ENCODE measurements at regions of chr5 and their contacts with region 1.

Region 1: GRCh38 chr5:68170826-68171558 is 44.6 kb upstream of the PIK3R1 start:
- DNase-seq: peak; percentile 98
- H3K4me3 ChIP-seq: peak overlapping the region in 1 of 4 donors; percentile 14
- H3K27ac ChIP-seq: peak overlapping the region; percentile 77 to 89 (median 87)
- H3K4me1 ChIP-seq: peaks cover 0 to 37% (median 36%) of the 10 kb centered on the region in 4 donors
- H3K27me3 ChIP-seq: no peaks in the 10 kb centered on the region
- CTCF ChIP-seq: no peak
- EP300 ChIP-seq: peak; percentile 98 to 99 (median 98)
- POLR2A ChIP-seq: no peak

Region 2: DNA sequence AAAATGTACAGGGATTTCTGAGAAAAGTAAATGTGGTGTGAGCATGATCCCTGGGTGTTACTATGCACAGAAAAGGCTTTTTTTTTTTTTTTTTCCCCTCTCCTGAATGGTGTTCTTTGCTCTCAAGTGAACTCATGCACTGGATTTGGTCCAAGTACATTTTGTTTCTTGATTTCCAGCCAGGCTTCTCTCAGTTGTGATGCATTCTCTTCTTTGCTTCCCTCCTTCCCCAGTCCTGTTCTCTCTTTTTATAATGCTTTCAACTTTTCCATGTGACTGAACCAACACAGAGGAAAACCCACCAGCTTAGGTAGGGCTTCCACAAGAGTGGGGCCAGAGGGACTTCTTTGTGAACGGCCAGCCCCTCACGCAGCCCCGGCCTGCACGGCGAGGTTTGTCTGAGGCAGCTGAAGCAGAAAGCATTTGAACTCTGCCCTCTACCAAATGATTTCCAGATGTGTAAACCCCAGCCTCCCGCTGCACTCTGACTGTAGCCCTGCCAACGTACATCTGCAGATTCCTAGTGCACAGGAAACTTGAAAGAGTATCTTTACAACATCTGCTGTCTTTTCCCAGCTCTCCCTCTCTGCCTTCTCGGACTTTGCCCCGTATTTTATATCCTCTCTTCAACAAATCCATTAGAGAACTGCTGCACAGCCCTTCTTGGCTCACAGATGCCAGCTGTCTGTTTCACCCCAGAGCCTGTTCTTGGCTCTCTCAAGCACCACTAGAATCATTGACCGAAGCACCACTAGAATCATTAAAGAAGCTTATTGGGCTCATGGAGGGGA is 902.6 kb before region 1 on chr5:
- intact Hi-C with region 1: loop called (anchors 1 kb)
- DNase-seq: peak; percentile 95
- H3K4me3 ChIP-seq: peak overlapping the region in 2 of 4 donors; percentile 13 to 14
- H3K27ac ChIP-seq: peak overlapping the region; percentile 91 to 94 (median 92)
- H3K4me1 ChIP-seq: peaks cover 0 to 89% (median 80%) of the 10 kb centered on the region in 4 donors
- H3K27me3 ChIP-seq: no peaks in the 10 kb centered on the region
- CTCF ChIP-seq: no peak
- EP300 ChIP-seq: peak; percentile 94 to 99 (median 96)
- POLR2A ChIP-seq: no peak

Region 3: DNA sequence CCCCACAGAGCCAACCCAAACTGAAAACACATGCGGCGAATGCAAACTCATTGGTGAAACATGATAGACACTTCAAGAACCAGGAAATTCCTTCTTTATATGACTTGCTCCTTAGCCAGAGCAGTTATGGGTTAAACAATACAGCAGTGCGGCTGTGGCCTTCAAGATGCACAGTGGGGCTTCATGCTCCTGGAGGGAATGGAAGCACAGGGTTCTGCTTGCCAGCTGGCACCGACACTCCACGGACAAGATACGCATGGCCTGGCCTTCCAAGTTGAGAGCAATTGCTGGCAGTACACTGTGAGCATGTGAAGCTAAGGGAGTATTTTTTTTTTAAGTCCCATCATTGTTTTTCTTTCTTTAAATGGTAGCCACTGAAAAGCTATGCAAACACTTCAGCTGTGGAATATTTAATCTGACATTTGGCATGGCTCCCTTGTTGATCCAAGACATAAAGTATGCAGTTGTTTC is 522.8 kb before region 1 on chr5:
- intact Hi-C with region 1: loop called (anchors 5 kb)
- DNase-seq: peak; percentile 98
- H3K4me3 ChIP-seq: no peak overlapping the region
- H3K27ac ChIP-seq: peak overlapping the region; percentile 77 to 82 (median 79)
- H3K4me1 ChIP-seq: peaks cover 0 to 62% (median 48%) of the 10 kb centered on the region in 4 donors
- H3K27me3 ChIP-seq: no peaks in the 10 kb centered on the region
- CTCF ChIP-seq: no peak
- EP300 ChIP-seq: peak; percentile 45 to 89 (median 74)
- POLR2A ChIP-seq: no peak

Region 4: DNA sequence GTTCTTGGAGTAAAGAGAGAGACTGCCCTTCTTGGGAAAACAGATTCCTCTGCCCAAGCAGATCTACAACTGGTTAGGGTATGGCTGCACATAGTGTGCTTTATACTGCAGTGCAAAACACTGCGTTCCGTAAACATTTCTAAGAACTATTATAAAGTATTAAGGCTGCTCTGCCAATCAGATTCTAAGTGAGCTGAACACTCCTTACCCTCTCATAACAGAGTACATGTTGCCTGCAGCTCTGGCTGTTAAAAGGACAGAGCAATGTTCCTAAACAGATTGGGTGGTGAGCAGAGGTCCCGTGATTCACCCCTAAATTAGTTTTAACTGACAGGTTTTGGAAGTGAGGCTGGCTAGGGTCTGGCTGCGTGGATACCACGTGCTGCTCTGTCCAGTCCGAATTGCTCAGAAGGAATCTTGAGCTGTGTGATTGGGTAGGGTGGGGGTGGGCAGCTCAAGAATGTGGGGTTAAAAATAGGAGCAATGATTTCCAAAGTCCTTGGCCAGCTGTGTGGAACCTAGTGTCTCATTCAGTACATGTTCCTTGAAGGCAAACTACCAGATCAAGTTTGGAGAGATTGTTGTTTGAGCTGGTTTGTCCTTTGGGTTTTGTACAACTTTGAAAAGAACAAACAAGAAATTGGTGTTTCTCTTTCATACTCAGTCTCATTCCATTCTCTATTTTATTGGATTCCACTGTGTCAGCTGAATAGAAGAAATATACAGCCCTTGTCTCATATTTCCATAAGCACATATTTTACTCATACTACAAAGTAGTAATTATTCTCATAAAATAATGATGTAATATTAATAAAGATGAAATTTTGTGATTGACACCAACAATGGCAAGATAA is 476.8 kb before region 1 on chr5:
- intact Hi-C with region 1: loop called (anchors 2 kb)
- DNase-seq: peak; percentile 97
- H3K4me3 ChIP-seq: no peak overlapping the region
- H3K27ac ChIP-seq: peak overlapping the region; percentile 83 to 89 (median 86)
- H3K4me1 ChIP-seq: peaks cover 0 to 37% (median 29%) of the 10 kb centered on the region in 4 donors
- H3K27me3 ChIP-seq: no peaks in the 10 kb centered on the region
- CTCF ChIP-seq: no peak
- EP300 ChIP-seq: peak; percentile 90 to 100 (median 98)
- POLR2A ChIP-seq: no peak

Region 5: DNA sequence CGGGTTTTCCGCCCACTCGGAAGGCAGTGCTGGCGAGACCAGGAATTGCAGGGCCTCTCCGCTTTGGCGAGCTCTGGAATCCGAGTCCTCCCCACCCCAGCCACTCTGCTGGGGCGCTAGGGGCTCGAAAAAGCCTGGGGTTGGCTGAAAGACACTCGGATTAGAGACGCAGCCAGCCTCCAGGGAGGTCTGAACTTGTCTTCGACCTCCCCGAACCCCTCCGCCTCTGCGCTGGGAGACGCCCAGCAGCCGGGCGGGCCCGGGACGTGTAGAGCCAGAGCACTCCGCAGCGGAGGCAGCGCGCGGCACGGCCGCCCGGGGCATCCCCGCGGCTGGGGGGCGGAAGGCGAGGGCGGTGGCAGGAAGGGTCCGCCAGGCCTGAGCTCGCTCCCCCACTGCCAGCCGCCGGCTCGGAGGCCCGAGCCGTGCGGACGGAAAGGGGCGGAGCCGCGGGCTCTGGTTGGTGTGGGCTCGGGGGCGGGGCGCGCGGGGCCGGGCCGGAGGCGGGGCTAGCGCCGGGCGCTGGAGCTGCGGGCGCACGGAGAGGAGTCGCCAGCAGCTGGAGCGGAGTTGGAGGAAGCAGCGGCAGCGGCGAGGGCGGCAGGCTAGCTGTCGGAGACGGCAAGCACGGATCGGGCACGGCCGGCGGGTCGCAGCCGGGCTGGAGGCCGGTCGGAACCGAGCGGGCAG is 44.4 kb after region 1 on chr5 and contains the start of gene PIK3R1:
- intact Hi-C with region 1: loop called (anchors 2 kb)
- DNase-seq: peak; percentile 97
- H3K4me3 ChIP-seq: peak within 1 kb of the TSS; percentile 90 to 98 (median 92)
- H3K27ac ChIP-seq: peak within 1 kb of the TSS; percentile 94 to 99 (median 96)
- H3K4me1 ChIP-seq: peaks cover 0 to 31% (median 27%) of the 10 kb centered on the region in 4 donors
- H3K27me3 ChIP-seq: no peaks in the 10 kb centered on the region
- CTCF ChIP-seq: peak in 3 of 4 experiments; percentile 50 to 60 (median 51)
- EP300 ChIP-seq: no peak
- POLR2A ChIP-seq: peak; percentile 56 to 59
- total RNA-seq, gene PIK3R1: 177 to 227 (median 190) TPM

Region 6: DNA sequence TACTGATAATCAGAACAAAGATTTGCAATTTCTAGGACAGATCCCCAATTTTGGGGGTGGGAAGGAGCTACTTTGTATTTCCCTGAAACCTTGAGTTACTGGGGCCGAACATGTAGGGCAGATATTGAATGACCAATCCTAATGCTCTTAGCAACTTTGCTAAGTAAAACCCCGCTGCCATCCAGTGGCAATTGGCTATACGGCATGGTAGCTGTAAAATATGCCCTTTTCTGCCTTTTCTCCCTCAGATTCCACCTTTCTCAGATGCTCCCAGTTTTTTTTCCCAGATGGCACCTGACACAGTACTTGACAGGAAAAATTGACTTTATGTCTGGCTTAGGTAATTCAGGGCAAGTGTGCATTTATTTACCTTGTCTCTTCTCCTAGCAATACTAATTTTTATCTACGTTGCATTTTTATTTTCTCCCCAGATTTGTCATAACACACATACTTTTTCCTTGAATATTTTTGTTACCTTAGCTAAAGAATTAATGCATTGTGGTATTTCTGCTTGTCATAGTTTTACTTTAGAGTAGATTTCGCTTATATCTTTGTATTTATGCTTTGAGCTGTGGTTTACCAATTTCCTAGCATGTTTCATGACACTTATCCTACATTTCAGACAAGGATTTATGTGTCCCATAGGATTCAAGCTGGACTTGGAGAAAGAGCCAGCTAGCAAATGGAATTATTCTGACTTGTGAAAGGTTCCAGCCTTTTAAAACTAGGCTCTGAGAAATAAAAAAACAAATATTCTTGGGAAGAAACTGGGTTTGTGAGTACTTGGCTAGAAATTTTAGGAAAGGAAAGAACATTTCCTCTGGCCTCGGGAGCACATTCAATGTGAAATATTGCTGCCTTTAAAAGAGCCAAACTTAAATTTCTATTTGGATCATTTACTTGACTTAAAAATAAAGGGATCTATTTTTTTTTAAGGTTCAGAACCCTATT is 82.0 kb after region 1 on chr5:
- intact Hi-C with region 1: loop called (anchors 5 kb)
- DNase-seq: peak; percentile 82
- H3K4me3 ChIP-seq: peak overlapping the region in 3 of 4 donors; percentile 26 to 33 (median 26)
- H3K27ac ChIP-seq: peak overlapping the region; percentile 67 to 83 (median 80)
- H3K4me1 ChIP-seq: peaks cover 0 to 100% (median 99%) of the 10 kb centered on the region in 4 donors
- H3K27me3 ChIP-seq: no peaks in the 10 kb centered on the region
- CTCF ChIP-seq: peak in 3 of 4 experiments; percentile 64 to 73 (median 73)
- EP300 ChIP-seq: peak in 1 of 4 donors; percentile 4
- POLR2A ChIP-seq: no peak

Region 7: DNA sequence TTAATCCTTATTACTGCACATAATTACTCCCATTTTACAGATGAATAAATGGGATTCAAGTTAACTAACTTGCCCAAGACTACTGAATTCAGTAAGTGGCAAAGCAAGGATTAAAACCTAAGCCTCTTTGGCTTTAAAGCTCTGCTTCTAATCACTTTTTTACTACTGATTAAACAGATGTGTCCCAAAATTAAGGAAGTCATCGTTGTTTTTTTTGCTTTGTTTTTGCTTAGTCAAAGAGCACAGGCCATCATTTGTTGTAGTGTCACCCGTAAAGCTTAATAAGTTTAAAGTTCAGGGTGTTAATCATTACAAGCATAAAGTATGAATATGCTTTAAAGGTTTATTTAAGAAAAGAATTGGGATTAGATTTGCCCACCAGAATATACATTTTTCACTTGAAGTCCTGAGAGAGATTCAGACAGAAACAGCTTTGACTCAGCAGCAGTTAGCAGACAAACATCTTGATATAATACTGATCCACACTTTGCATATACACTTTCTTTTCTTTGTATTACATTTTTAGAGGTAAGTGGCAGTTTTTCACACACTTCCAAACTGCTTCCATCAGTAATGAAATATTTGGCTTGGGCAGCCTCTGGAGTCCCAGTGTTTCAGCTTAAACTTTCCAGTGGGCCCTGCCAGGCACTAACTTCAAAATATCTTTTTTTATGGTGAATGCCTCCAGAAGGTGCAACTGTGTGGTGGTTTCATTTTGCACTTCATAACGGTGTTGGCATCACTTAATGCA is 97.3 kb after region 1 on chr5:
- intact Hi-C with region 1: loop called (anchors 5 kb)
- DNase-seq: no peak
- H3K4me3 ChIP-seq: no peak overlapping the region
- H3K27ac ChIP-seq: peak overlapping the region; percentile 75 to 89 (median 83)
- H3K4me1 ChIP-seq: peaks cover 0 to 100% (median 94%) of the 10 kb centered on the region in 4 donors
- H3K27me3 ChIP-seq: no peaks in the 10 kb centered on the region
- CTCF ChIP-seq: no peak
- EP300 ChIP-seq: no peak
- POLR2A ChIP-seq: no peak

Measured in sigmoid colon (tissue), 7 donors.